ENCODE measurements at regions of chrX and their contacts with region 1.

Region 1: DNA sequence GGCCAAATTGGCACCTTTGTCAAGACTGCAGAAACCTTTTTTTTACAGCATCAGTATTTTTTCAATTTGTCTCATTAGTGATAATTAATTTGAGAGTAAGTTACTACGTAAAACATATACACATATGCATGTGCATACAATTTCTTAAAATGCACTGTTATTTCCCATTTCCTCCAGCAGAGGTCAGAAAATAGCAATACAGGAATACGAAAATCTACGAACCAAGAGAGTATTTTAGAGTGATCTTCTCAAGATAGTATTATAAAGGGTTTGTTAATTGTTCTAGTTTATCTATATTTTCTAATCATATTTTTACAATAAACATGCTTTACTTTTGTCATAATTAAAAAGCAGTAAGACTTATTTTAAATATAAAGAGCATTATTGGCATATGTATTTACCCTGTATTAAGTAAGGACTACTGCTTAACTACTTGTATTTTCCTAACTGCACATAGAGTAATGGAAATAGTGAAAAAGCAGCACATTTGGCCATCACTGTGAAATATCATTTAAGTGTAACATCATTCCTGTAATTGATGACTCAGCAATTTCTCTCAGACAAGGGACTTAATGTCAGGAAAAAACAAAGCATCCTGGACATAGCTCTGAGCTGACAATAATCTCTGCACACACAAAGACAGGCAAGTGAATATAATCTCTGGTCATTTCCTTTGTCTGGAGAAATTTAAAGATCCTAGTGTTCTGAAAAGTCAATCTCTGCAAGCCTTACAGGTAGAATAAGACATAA is 45.6 kb downstream of the MAOB start:
- DNase-seq: peak; percentile 4 to 25 (median 6)
- ATAC-seq: no peak
- H3K4me3 ChIP-seq: no peak overlapping the region
- H3K27ac ChIP-seq: no peak overlapping the region
- H3K4me1 ChIP-seq: no peaks in the 10 kb centered on the region
- H3K27me3 ChIP-seq: no peaks in the 10 kb centered on the region
- CTCF ChIP-seq: peak; percentile 27 to 52 (median 32); a peak in 4 of 6 replicates
- EP300 ChIP-seq: no peak
- POLR2A ChIP-seq: no peak
- RAD21 ChIP-seq: peak; percentile 37 to 60; a peak in 3 of 4 replicates

Region 2: DNA sequence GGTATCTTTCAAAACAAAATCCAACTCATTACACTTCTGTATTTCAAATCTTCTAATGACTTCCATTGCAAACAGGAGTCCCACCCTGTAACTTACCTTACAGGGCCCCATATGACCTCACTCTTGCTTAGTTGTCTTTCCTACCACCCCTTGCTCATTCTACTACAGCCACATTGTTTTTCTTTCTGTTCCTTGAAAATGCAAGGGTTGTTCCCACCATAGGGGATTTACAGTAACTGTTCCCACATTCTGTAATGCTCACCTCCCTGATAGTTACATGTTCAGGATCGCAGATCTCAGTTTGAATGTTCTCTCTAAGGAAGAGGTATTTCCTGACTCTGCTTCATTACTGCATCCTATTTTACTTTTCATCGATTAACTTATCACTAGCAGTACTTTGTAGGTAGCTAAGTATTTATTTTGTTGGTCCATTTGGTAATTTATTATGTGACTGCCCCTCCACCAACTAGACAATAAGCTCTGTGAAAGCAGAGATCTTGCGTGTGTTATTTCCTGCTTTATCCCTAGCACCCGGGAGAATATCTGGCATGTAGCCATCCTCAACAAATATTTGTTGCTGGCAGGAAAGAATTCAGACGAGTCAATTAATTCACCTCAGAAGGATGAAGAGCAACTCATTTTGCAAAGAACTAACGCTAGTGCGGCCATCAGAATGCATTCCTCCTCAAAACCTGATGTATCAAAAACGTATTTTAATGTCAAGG is 24.2 kb after region 1 on chrX:
- CTCF ChIA-PET with region 1: no interaction called
- POLR2A ChIA-PET with region 1: no interaction called
- in situ Hi-C with region 1: no loop called
- intact Hi-C with region 1: no loop called
- DNase-seq: no peak
- ATAC-seq: no peak
- H3K4me3 ChIP-seq: no peak overlapping the region
- H3K27ac ChIP-seq: no peak overlapping the region
- H3K4me1 ChIP-seq: no peaks in the 10 kb centered on the region
- H3K27me3 ChIP-seq: no peaks in the 10 kb centered on the region
- CTCF ChIP-seq: no peak
- EP300 ChIP-seq: no peak
- POLR2A ChIP-seq: no peak
- RAD21 ChIP-seq: no peak

Region 3: GRCh38 chrX:43899878-43900815 is 63.5 kb after region 1 on chrX:
- CTCF ChIA-PET with region 1: no interaction called
- POLR2A ChIA-PET with region 1: no interaction called
- in situ Hi-C with region 1: no loop called
- intact Hi-C with region 1: loop called (anchors 10 kb)
- DNase-seq: no peak
- ATAC-seq: no peak
- H3K4me3 ChIP-seq: no peak overlapping the region
- H3K27ac ChIP-seq: no peak overlapping the region
- H3K4me1 ChIP-seq: no peaks in the 10 kb centered on the region
- H3K27me3 ChIP-seq: no peaks in the 10 kb centered on the region
- CTCF ChIP-seq: no peak
- EP300 ChIP-seq: no peak
- POLR2A ChIP-seq: no peak
- RAD21 ChIP-seq: no peak

Region 4: DNA sequence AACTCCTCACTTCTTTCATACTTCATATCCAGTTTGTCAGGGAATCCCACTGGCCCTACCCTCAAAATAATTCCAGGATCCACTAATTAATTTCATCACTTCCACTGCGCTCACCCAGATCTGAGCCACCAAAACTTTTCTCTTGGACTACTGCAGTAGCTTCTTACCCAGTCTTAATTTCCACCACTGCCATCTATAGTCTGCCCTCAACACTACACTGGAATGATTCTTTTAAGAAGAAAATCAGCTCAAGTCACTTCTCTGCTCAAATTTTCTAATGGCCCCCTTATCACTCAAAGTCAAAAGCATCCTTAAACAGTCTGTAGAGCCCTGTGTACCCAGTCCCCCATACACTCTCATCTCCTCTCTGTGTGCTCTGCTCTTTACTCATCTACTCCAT is 401.6 kb after region 1 on chrX:
- CTCF ChIA-PET with region 1: interaction called, 3 read pairs
- POLR2A ChIA-PET with region 1: no interaction called
- in situ Hi-C with region 1: no loop called
- intact Hi-C with region 1: loop called (anchors 5 kb)
- DNase-seq: no peak
- ATAC-seq: no peak
- H3K4me3 ChIP-seq: no peak overlapping the region
- H3K27ac ChIP-seq: no peak overlapping the region
- H3K4me1 ChIP-seq: no peaks in the 10 kb centered on the region
- H3K27me3 ChIP-seq: no peaks in the 10 kb centered on the region
- CTCF ChIP-seq: no peak
- EP300 ChIP-seq: no peak
- POLR2A ChIP-seq: no peak
- RAD21 ChIP-seq: no peak